ENCODE measurements at regions of chr9 and their contacts with region 1.

Region 1: DNA sequence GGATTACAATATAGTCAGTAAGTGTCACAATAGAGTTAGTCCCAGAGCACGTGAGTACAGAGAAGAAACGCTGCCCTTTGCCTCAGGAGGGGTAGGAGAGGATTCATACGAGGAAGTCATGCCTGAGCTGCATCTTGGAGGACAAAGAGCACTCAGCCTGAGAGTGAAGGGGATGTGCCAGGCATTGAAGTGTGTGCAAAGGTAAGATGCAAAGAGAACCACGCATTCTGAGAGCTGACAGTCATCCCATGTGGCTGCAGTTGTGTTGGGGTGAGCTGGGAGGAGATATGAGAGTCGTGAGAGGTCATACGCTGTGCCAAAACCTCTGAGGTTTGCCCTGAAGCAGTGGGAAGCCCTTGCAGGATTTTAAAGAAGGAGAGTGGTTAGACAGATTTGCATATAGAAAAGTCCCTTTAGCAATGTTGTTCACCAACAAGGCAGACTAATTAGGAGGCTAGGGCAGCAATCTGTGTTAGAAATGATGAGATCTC is 97.5 kb downstream of the PIP5K1B start:
- DNase-seq: no peak
- H3K4me3 ChIP-seq: no peak overlapping the region
- H3K27ac ChIP-seq: no peak overlapping the region
- H3K4me1 ChIP-seq: no peaks in the 10 kb centered on the region
- H3K27me3 ChIP-seq: peaks cover 9% of the 10 kb centered on the region; the same call in 1 of the 2 replicates

Region 2: GRCh38 chr9:68739621-68740174 is 62.9 kb before region 1 on chr9:
- in situ Hi-C with region 1: loop called (anchors 10 kb)
- DNase-seq: no peak
- H3K4me3 ChIP-seq: no peak overlapping the region
- H3K27ac ChIP-seq: no peak overlapping the region
- H3K4me1 ChIP-seq: no peaks in the 10 kb centered on the region
- H3K27me3 ChIP-seq: no peaks in the 10 kb centered on the region

Region 3: DNA sequence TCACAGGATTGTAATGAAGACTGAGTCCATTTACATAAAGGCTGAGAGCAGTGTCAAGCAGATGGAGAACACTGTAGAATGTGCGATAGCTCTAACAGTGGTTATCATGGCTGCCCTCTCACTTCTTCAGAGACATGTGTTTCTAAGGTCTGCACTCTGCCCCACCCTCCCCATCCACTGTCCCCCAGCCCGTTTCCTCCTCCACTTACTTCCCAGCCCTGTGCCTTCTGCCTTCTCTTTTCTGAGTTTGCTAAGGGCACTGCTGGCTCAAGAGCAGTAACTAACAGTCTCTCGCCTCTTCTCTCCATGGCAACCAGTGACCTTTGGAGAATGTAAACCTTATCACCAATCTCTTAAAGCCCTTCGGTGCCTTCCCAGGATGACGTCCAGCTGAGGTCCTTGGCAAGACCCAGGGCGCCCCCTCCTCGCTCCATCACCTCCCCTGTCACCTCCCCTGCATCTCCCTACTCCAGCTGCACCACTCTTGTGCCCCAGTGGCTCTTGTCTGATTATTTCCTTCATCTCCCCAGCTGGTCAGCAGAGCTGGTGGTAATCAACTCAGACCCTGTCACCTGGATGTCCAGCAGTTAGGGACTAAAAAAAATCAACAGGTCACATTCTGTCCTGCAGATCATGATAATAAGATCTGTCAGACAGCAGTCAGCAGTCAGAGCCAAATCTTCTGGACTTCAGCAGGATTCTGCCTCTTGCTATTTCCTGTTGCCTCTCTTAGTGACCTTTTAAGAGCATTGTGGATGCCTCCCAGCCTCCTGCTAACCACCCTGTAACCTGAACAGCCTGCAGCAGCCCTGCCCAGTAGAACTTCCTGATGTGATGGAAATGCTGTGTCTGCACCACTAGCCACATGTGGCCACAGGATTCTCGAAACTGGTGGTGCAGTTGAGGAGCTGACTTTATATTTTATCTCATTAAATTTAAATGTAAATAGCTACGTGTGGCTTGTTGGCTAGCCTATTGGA is 242.0 kb after region 1 on chr9:
- in situ Hi-C with region 1: no loop called
- DNase-seq: peak; percentile 19
- H3K4me3 ChIP-seq: no peak overlapping the region
- H3K27ac ChIP-seq: no peak overlapping the region
- H3K4me1 ChIP-seq: peaks cover 6% of the 10 kb centered on the region; the same call in 1 of the 2 replicates
- H3K27me3 ChIP-seq: no peaks in the 10 kb centered on the region